ENCODE measurements at regions of chr13 and their contacts with region 1.

Region 1: GRCh38 chr13:77429320-77430142 is 102.6 kb upstream of the MYCBP2 start:
- DNase-seq: no peak
- H3K4me3 Mint-ChIP-seq: no peak overlapping the region
- H3K27ac Mint-ChIP-seq: peak overlapping the region; percentile 49
- H3K4me1 Mint-ChIP-seq: peaks cover 11% of the 10 kb centered on the region
- H3K27me3 Mint-ChIP-seq: no peaks in the 10 kb centered on the region

Region 2: GRCh38 chr13:77386880-77387606 is 42.5 kb before region 1 on chr13:
- intact Hi-C with region 1: loop called (anchors 1 kb)
- DNase-seq: no peak
- H3K4me3 Mint-ChIP-seq: no peak overlapping the region
- H3K27ac Mint-ChIP-seq: no peak overlapping the region
- H3K4me1 Mint-ChIP-seq: peaks cover 11% of the 10 kb centered on the region
- H3K27me3 Mint-ChIP-seq: peaks cover 42% of the 10 kb centered on the region

Region 3: DNA sequence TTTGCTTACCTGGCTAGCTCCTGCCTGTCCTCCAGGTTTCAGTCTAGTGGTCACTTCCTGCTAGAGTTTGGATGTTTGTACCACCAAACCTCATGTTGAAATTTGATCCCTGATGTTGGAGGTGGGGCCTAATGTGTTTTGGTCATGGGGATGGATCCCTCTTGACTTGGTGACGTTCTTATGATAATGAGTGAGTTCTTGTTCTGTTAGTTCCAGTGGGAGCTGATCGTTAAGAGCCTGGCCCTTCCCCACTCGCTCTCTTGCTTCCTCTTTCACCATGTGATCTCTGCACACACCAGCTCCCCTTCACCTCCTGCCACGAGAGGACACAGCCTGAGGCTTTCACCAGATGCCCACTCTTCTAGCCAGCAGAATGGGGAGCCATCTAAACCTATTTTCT is 19.1 kb after region 1 on chr13:
- intact Hi-C with region 1: no loop called
- DNase-seq: no peak
- H3K4me3 Mint-ChIP-seq: no peak overlapping the region
- H3K27ac Mint-ChIP-seq: no peak overlapping the region
- H3K4me1 Mint-ChIP-seq: no peaks in the 10 kb centered on the region
- H3K27me3 Mint-ChIP-seq: peaks cover 3% of the 10 kb centered on the region

Region 4: GRCh38 chr13:77465603-77466205 is 36.2 kb after region 1 on chr13:
- intact Hi-C with region 1: no loop called
- DNase-seq: no peak
- H3K4me3 Mint-ChIP-seq: no peak overlapping the region
- H3K27ac Mint-ChIP-seq: no peak overlapping the region
- H3K4me1 Mint-ChIP-seq: no peaks in the 10 kb centered on the region
- H3K27me3 Mint-ChIP-seq: peaks cover 4% of the 10 kb centered on the region

Measured in activated T-helper 1 cell treated with anti-CD3 and anti-CD28 coated beads, Interleukin-12 subunit alpha, Interleukin-12 subunit beta, Interleukin-2, Interleukin-4 antibody, amounts not matched to agents 30 ng/mL and 10 ng/mL and 1 ng/mL, durations not matched to agents 14 hours and 24 hours and 36 hours (primary cell).